ENCODE measurements at regions of chr17 and their contacts with region 1.

Region 1: DNA sequence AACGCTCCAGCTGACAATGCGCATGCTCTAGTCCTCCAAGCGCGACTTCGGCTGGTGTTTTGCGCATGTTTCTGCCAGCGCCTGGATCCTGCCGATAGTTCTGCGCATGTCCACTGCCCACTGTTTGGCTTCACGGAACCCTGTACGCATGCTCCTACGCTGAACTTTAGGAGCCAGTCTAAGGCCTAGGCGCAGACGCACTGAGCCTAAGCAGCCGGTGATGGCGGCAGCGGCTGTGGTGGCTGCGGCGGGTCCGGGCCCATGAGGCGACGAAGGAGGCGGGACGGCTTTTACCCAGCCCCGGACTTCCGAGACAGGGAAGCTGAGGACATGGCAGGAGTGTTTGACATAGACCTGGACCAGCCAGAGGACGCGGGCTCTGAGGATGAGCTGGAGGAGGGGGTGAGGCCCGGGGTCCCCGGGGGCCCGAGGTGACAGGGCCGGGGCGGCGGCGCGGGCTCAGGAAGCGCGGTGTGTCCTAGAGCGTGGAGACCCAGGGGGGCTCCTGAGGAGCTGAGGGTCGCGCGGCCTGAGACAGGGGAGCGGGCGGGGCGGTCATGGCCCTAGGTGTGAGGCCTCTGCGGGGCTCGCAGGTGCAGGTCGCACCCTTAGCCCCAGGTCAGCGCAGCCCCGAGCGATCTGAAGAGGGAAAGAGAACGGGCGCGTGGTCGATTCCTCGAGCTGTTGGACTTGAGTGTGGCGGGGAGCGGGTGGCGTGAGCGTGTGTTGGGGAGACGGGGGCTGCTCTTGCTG is at the starts of genes RPS6KB1 and TUBD1:
- DNase-seq: peak; percentile 100
- ATAC-seq: peak; percentile 89
- H3K4me3 ChIP-seq: peak within 1 kb of the TSS; percentile 74 to 96 (median 82)
- H3K4me3 Mint-ChIP-seq: peak within 1 kb of the TSS; percentile 98
- H3K27ac ChIP-seq: peak within 1 kb of the TSS; percentile 94 to 95
- H3K27ac Mint-ChIP-seq: peak within 1 kb of the TSS; percentile 99
- H3K4me1 ChIP-seq: peaks cover 19 to 23% of the 10 kb centered on the region in 2 donors
- H3K4me1 Mint-ChIP-seq: peaks cover 52% of the 10 kb centered on the region
- H3K27me3 ChIP-seq: no peaks in the 10 kb centered on the region
- H3K27me3 Mint-ChIP-seq: no peaks in the 10 kb centered on the region
- CTCF ChIP-seq: no peak
- total RNA-seq, gene RPS6KB1: 69.7 and 84.9 TPM in 2 replicates
- total RNA-seq, gene TUBD1: 19.7 and 20.0 TPM in 2 replicates

Region 2: GRCh38 chr17:59707114-59707970 is 185.8 kb before region 1 on chr17 and contains the starts of genes PTRH2 and VMP1:
- CTCF ChIA-PET with region 1: interaction called, 3 read pairs
- POLR2A ChIA-PET with region 1: interaction called, 5 read pairs
- intact Hi-C with region 1: loop called (anchors 1 kb)
- DNase-seq: peak; percentile 95
- ATAC-seq: peak; percentile 90
- H3K4me3 ChIP-seq: peak within 1 kb of the TSS; percentile 72 to 98 (median 94)
- H3K4me3 Mint-ChIP-seq: peak within 1 kb of the TSS; percentile 99
- H3K27ac ChIP-seq: peak within 1 kb of the TSS; percentile 86 to 98
- H3K27ac Mint-ChIP-seq: peak within 1 kb of the TSS; percentile 97
- H3K4me1 ChIP-seq: peaks cover 23 to 24% of the 10 kb centered on the region in 2 donors
- H3K4me1 Mint-ChIP-seq: peaks cover 55% of the 10 kb centered on the region
- H3K27me3 ChIP-seq: no peaks in the 10 kb centered on the region
- H3K27me3 Mint-ChIP-seq: no peaks in the 10 kb centered on the region
- CTCF ChIP-seq: no peak
- total RNA-seq, gene PTRH2: 17.8 and 22.7 TPM in 2 replicates
- total RNA-seq, gene VMP1: 78.5 and 83.5 TPM in 2 replicates

Region 3: DNA sequence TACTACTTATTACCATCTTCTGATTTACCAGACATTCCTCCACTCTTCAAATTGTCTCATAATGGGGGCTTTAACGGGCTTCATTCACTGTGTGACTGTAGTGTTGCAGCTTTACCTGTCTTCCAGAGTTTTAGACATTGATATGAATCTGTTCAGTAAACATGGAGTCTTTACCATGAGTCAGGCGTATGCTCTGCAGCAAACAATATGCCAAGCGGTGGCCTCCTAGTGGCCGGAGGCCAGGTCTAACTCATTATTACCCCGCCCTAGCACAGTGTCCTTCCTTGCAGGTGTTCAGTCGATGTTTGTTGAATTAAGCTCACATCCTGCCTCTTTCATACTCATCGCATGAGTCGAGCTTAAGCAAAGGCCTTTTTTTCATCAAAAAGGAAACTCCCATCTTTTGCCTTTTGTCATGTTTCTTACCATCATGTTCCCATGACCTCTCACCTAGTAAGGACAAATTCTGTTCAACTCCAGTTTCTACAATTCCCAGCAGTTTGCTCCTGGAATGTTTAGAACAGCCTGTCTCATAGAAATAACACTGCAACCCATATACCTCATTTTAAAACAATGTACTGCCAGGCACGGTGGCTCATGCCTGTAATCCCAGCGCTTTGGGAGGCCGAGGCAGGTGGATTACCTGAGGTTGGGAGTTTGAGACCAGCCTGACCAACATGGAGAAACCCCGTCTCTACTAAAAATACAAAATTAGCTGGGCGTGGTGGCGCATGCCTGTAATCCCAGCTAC is 39.8 kb before region 1 on chr17:
- CTCF ChIA-PET with region 1: interaction called, 3 read pairs
- POLR2A ChIA-PET with region 1: no interaction called
- intact Hi-C with region 1: loop called (anchors 2 kb)
- DNase-seq: peak; percentile 60
- ATAC-seq: peak; percentile 82
- H3K4me3 ChIP-seq: no peak overlapping the region
- H3K4me3 Mint-ChIP-seq: no peak overlapping the region
- H3K27ac ChIP-seq: no peak overlapping the region
- H3K27ac Mint-ChIP-seq: peak overlapping the region; percentile 78
- H3K4me1 ChIP-seq: peaks cover 11 to 19% of the 10 kb centered on the region in 2 donors
- H3K4me1 Mint-ChIP-seq: peaks cover 20% of the 10 kb centered on the region
- H3K27me3 ChIP-seq: no peaks in the 10 kb centered on the region
- H3K27me3 Mint-ChIP-seq: no peaks in the 10 kb centered on the region
- CTCF ChIP-seq: peak; percentile 26

Region 4: DNA sequence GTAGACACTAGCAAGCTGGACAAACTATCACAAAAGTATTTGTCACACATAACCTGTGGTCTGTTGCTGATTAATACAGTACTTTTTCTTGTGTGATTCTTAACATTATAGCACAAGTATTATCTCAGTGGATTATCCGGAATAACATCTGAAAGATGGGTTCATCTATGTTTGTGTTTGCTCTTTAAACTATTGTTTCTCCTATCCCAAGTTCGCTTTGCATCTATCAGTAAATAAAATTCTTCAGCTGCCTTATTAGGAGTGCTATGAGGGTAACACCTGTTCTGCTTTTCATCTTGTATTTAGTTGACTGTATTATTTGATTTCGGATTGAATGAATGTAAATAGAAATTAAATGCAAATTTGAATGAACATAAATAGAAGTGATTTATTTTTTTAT is 56.9 kb after region 1 on chr17:
- CTCF ChIA-PET with region 1: no interaction called
- POLR2A ChIA-PET with region 1: no interaction called
- intact Hi-C with region 1: no loop called
- DNase-seq: no peak
- ATAC-seq: no peak
- H3K4me3 ChIP-seq: no peak overlapping the region
- H3K4me3 Mint-ChIP-seq: no peak overlapping the region
- H3K27ac ChIP-seq: no peak overlapping the region
- H3K27ac Mint-ChIP-seq: no peak overlapping the region
- H3K4me1 ChIP-seq: no peaks in the 10 kb centered on the region
- H3K4me1 Mint-ChIP-seq: peaks cover 8% of the 10 kb centered on the region
- H3K27me3 ChIP-seq: no peaks in the 10 kb centered on the region
- H3K27me3 Mint-ChIP-seq: no peaks in the 10 kb centered on the region
- CTCF ChIP-seq: no peak

Region 5: DNA sequence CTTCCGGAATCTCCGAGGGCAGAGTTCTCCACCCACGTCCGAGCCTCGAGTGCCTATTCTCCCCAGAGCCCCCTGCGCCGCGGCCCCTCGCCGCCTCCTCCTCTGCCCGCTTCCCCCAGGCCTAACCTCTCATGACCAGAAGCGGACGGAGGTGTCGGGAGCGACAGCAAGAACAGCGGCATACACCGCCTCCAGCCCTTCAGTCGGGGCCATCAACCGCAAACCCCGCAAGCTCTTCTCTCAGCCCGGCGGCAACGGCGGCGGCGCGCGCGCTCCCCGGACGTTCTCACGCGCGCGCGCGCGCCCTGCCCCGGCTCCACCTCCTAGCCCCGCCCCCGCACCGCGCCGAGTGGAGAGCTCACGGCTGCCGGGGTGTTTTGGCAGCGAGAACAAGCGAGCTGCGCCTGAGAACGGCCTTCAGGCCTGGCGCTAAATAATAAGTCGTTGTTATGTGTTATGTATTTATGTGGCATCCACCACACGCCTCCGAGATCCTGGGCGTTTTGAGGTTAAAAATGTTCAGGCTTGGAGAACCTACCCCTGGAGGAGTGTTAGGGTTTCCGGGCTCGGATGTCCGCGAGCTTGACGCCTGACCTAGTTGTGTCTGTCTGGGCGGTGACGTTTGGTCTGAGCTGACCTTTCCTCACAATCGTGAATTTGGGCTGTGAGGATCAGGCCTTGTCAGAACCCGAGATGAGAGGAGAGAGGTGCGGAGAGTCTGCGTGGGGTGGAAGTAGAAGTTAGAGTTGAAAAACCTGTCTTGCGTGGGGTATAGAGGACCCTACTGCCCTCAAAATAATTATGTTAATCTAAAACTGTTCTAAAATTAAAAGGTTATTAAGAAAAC is 71.6 kb after region 1 on chr17 and contains the start of gene RNFT1:
- CTCF ChIA-PET with region 1: no interaction called
- POLR2A ChIA-PET with region 1: no interaction called
- intact Hi-C with region 1: loop called (anchors 2 kb)
- DNase-seq: peak; percentile 93
- ATAC-seq: peak; percentile 92
- H3K4me3 ChIP-seq: peak within 1 kb of the TSS; percentile 71 to 98 (median 92)
- H3K4me3 Mint-ChIP-seq: peak within 1 kb of the TSS; percentile 94
- H3K27ac ChIP-seq: peak within 1 kb of the TSS; percentile 77 to 91
- H3K27ac Mint-ChIP-seq: peak within 1 kb of the TSS; percentile 95
- H3K4me1 ChIP-seq: peaks cover 13 to 19% of the 10 kb centered on the region in 2 donors
- H3K4me1 Mint-ChIP-seq: peaks cover 20% of the 10 kb centered on the region
- H3K27me3 ChIP-seq: no peaks in the 10 kb centered on the region
- H3K27me3 Mint-ChIP-seq: no peaks in the 10 kb centered on the region
- CTCF ChIP-seq: no peak
- total RNA-seq, gene RNFT1: 46.5 and 49.4 TPM in 2 replicates